PC-3 (cell line): ENCODE measurements at regions of chr14 and their contacts with region 1.

Region 1: GRCh38 chr14:74712499-74713394 is at the starts of genes AREL1 and FCF1:
- DNase-seq: peak; percentile 93
- ATAC-seq: peak; percentile 96
- H3K4me3 ChIP-seq: peak within 1 kb of the TSS; percentile 95
- H3K27ac ChIP-seq: no peak within 1 kb of the TSS
- H3K4me1 ChIP-seq: peaks cover 8% of the 10 kb centered on the region; the same call in 1 of the 2 replicates
- H3K27me3 ChIP-seq: no peaks in the 10 kb centered on the region
- CTCF ChIP-seq: no peak
- total RNA-seq, gene AREL1: 25.4 and 32.1 TPM in 2 replicates
- total RNA-seq, gene FCF1: 29.7 and 33.1 TPM in 2 replicates

Region 2: DNA sequence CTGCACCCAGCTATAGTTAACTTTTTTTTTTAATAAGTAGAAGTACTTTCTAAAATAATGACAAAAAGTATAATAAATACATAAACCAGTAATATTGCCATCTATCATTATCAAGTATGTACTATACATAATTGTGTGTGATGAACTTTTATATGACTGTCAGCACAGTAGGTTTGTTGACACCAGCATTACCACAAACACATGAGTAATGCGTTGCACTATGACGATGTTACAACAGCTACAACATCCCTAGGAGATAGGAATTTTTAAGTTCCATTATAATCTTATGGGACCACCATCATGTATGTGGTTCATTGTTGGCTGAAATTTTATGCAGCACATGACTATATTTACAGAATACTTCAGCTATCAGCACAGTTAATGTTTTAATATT is 536.4 kb before region 1 on chr14:
- CTCF ChIA-PET with region 1: no interaction called
- POLR2A ChIA-PET with region 1: no interaction called
- intact Hi-C with region 1: no loop called
- DNase-seq: no peak
- ATAC-seq: no peak
- H3K4me3 ChIP-seq: no peak overlapping the region
- H3K27ac ChIP-seq: no peak overlapping the region
- H3K4me1 ChIP-seq: no peaks in the 10 kb centered on the region
- H3K27me3 ChIP-seq: no peaks in the 10 kb centered on the region
- CTCF ChIP-seq: no peak

Region 3: DNA sequence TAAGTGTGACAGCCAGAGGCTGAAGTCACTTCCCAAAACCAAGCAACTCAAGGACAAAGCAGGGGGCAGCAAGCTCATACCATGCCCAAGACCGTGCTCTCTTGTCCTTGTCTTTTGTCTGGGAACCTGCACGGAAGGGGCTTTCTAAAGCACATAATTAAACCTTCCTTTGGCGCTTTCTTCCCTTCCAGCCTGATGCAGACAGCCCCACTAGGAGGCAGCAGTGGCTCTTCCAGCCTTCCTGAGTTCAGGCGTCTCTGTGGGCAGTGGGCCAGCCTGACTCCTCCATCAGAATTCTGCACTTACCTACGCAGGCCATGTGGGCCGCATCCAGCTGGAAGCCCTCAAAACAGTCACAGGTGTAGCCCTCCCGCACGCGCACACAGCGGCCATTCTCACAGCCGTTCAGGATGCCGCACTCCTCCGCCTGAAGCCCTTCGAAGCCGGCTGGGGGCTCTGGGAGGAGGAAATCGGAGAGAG is 211.6 kb before region 1 on chr14:
- CTCF ChIA-PET with region 1: no interaction called
- POLR2A ChIA-PET with region 1: no interaction called
- intact Hi-C with region 1: loop called (anchors 5 kb)
- DNase-seq: peak; percentile 85
- ATAC-seq: peak; percentile 76
- H3K4me3 ChIP-seq: no peak overlapping the region
- H3K27ac ChIP-seq: no peak overlapping the region
- H3K4me1 ChIP-seq: no peaks in the 10 kb centered on the region
- H3K27me3 ChIP-seq: no peaks in the 10 kb centered on the region
- CTCF ChIP-seq: peak; percentile 87

Region 4: GRCh38 chr14:74571901-74572725 is 140.6 kb before region 1 on chr14:
- CTCF ChIA-PET with region 1: no interaction called
- POLR2A ChIA-PET with region 1: no interaction called
- intact Hi-C with region 1: no loop called
- DNase-seq: peak; percentile 97
- ATAC-seq: peak; percentile 80
- H3K4me3 ChIP-seq: peak overlapping the region; percentile 57
- H3K27ac ChIP-seq: peak overlapping the region; percentile 98
- H3K4me1 ChIP-seq: peaks cover 69% of the 10 kb centered on the region
- H3K27me3 ChIP-seq: no peaks in the 10 kb centered on the region
- CTCF ChIP-seq: no peak

Region 5: GRCh38 chr14:74762917-74763802 is 50.4 kb after region 1 on chr14 and contains the start of gene YLPM1:
- CTCF ChIA-PET with region 1: no interaction called
- POLR2A ChIA-PET with region 1: no interaction called
- intact Hi-C with region 1: loop called (anchors 2 kb)
- DNase-seq: peak; percentile 98
- ATAC-seq: peak; percentile 91
- H3K4me3 ChIP-seq: peak within 1 kb of the TSS; percentile 90
- H3K27ac ChIP-seq: peak within 1 kb of the TSS; percentile 41
- H3K4me1 ChIP-seq: peaks cover 20% of the 10 kb centered on the region
- H3K27me3 ChIP-seq: no peaks in the 10 kb centered on the region
- CTCF ChIP-seq: peak; percentile 69
- total RNA-seq, gene YLPM1: 25.1 and 30.8 TPM in 2 replicates

Region 6: GRCh38 chr14:74793506-74794168 is 80.9 kb after region 1 on chr14:
- CTCF ChIA-PET with region 1: no interaction called
- POLR2A ChIA-PET with region 1: interaction called, 15 read pairs
- intact Hi-C with region 1: no loop called
- DNase-seq: peak; percentile 32
- ATAC-seq: no peak
- H3K4me3 ChIP-seq: no peak overlapping the region
- H3K27ac ChIP-seq: no peak overlapping the region
- H3K4me1 ChIP-seq: no peaks in the 10 kb centered on the region
- H3K27me3 ChIP-seq: no peaks in the 10 kb centered on the region
- CTCF ChIP-seq: peak; percentile 59